MCF 10A (cell line): ENCODE measurements at regions of chr15 and their contacts with region 1.

Region 1: GRCh38 chr15:64010719-64011118 is 35.6 kb downstream of the DAPK2 start:
- DNase-seq: peak; percentile 97
- H3K4me3 Mint-ChIP-seq: peak overlapping the region; percentile 31
- H3K27ac Mint-ChIP-seq: peak overlapping the region; percentile 84
- H3K4me1 Mint-ChIP-seq: peaks cover 68% of the 10 kb centered on the region
- H3K27me3 Mint-ChIP-seq: no peaks in the 10 kb centered on the region
- CTCF ChIP-seq: no peak

Region 2: DNA sequence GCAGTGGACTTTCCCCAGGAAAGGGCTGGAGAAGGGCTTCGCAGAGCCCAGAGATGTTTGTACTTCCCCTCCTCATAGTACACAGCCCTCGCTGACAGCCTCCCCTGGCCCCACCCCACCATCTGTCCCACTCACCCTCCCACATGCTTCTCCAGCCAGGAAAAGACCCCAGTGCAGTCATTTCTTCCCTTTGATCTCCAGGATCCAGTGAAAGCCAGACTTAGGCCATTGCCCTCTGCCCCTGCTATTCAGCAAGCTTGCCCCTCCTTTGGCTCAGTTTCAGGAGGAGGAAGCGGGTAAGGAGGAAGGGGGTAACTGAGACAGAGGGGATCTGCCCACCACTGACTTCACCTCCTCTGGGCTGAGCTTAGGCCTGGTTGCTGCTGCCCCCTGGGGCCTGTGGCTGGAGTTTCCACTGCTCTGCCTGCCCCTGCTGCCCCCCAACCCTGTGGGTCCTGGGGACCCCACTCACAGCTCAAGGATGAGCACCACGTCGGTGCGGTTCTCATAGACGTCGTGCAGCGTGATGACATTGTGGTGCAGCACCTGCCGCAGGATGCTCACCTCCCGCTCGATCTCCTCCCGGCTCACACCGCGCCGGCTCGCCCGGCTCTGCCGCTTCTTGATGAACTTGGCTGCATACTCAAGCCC is 27.5 kb before region 1 on chr15:
- CTCF ChIA-PET with region 1: interaction called, 4 read pairs
- POLR2A ChIA-PET with region 1: interaction called, 12 read pairs
- intact Hi-C with region 1: no loop called
- DNase-seq: no peak
- H3K4me3 Mint-ChIP-seq: no peak overlapping the region
- H3K27ac Mint-ChIP-seq: no peak overlapping the region
- H3K4me1 Mint-ChIP-seq: no peaks in the 10 kb centered on the region
- H3K27me3 Mint-ChIP-seq: no peaks in the 10 kb centered on the region
- CTCF ChIP-seq: no peak